Breast epithelium (tissue), 4 donors: ENCODE measurements at regions of chr5 and their contacts with region 1.

Region 1: GRCh38 chr5:174935854-174936474 is 211.6 kb downstream of the MSX2 start:
- DNase-seq: peak; percentile 22 to 68
- H3K4me3 ChIP-seq: no peak overlapping the region
- H3K27ac ChIP-seq: no peak overlapping the region
- H3K4me1 ChIP-seq: no peaks in the 10 kb centered on the region
- H3K27me3 ChIP-seq: peaks cover 0 to 11% of the 10 kb centered on the region in 2 donors
- CTCF ChIP-seq: peak; percentile 37 to 73 (median 67)
- POLR2A ChIP-seq: no peak

Region 2: GRCh38 chr5:174618032-174618324 is 318.0 kb before region 1 on chr5:
- intact Hi-C with region 1: loop called (anchors 5 kb)
- DNase-seq: no peak
- H3K4me3 ChIP-seq: no peak overlapping the region
- H3K27ac ChIP-seq: no peak overlapping the region
- H3K4me1 ChIP-seq: no peaks in the 10 kb centered on the region
- H3K27me3 ChIP-seq: no peaks in the 10 kb centered on the region
- CTCF ChIP-seq: no peak
- POLR2A ChIP-seq: no peak

Region 3: DNA sequence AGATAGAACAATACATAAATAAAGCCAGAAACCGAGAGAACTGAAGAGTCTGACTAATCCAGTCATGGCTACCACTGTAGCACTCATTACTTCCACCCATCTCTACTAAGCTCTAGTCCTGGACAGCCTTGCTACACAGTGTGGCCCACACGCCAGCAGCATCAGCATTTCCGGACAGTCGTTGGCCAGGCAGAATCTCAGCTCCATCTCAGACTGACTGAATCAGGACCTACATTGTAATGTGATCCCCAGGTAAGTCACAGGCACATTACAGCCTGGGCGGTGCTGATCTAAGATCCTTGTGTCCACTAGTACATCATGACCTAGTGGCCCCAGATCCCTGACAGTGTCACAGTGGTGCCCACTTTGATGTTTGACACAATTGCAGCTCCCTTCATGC is 325.1 kb after region 1 on chr5:
- intact Hi-C with region 1: loop called (anchors 5 kb)
- DNase-seq: no peak
- H3K4me3 ChIP-seq: no peak overlapping the region
- H3K27ac ChIP-seq: no peak overlapping the region
- H3K4me1 ChIP-seq: no peaks in the 10 kb centered on the region
- H3K27me3 ChIP-seq: no peaks in the 10 kb centered on the region
- CTCF ChIP-seq: no peak
- POLR2A ChIP-seq: no peak